RWPE1 (cell line): ENCODE measurements at regions of chr15 and their contacts with region 1.

Region 1: GRCh38 chr15:59532770-59533379 is 78.7 kb upstream of the GCNT3 start:
- DNase-seq: peak; percentile 52
- H3K27ac ChIP-seq: no peak overlapping the region
- CTCF ChIP-seq: peak; percentile 92

Region 2: DNA sequence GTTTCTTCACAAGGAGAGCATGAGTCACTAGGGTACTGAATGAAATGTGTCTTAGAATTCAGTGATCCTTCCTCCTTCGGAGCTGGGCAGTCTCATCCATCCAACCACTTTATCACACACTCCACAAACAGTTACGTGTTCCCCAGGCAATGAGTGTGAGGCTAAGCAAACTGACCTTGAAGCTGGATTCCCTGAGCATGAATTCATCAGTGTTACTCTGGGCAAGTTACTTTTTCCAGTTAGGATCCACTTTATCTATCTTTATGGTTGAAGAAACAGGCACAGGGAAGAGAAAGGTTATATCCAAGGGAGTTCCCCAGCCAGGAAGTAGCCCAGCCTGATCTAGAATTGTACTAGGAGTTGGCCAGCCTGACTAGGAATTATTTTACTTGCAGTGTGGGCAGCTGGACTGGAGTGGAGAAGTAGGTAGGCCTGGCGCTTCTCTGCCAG is 61.6 kb after region 1 on chr15:
- CTCF ChIA-PET with region 1: interaction called, 11 read pairs
- POLR2A ChIA-PET with region 1: no interaction called
- DNase-seq: peak; percentile 54
- H3K27ac ChIP-seq: no peak overlapping the region
- CTCF ChIP-seq: no peak

Region 3: DNA sequence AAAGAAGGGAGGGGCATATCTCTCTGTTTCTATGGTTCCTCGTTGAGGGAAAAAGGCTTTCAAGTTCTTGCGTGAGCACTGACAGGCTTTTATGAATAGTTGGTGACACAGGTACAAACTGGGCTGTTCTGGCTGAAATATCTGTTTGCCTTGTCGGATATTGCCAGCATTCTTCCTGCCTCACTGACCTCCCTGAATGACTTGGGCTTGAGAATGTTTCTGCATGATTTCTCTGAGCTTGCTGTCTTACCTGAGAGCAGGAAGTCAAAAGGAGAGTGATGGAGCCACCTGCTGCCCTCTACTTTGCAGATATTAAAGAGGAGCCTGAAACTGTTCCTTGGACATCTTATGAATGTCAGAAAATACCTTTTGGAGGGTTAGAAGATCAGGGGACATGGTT is 83.5 kb after region 1 on chr15:
- CTCF ChIA-PET with region 1: interaction called, 14 read pairs
- POLR2A ChIA-PET with region 1: no interaction called
- DNase-seq: no peak
- H3K27ac ChIP-seq: no peak overlapping the region
- CTCF ChIP-seq: no peak

Region 4: DNA sequence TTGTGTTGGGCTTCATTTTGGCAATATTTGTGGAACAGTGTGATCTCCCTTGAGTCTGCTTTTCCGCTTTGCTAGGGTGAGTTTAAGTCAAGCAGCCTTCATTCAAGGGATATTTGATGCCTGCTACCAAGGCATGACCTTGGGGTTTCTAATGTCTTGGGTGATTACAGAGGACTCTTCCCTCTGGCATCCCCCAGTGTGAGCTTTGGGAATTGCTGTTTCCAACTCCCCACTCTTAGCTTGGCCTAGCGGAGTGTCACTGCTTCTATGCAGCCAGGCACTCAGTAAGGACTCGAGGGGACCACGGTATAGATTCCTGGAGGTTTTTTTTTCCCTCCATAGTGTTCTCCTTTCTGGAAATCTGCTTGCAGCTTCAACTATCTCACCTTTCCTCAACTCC is 99.8 kb after region 1 on chr15:
- CTCF ChIA-PET with region 1: interaction called, 16 read pairs
- POLR2A ChIA-PET with region 1: interaction called, 6 read pairs
- DNase-seq: no peak
- H3K27ac ChIP-seq: no peak overlapping the region
- CTCF ChIP-seq: no peak; the same call in 1 of the 2 replicates

Region 5: GRCh38 chr15:59642351-59642750 is 109.5 kb after region 1 on chr15:
- CTCF ChIA-PET with region 1: interaction called, 18 read pairs
- POLR2A ChIA-PET with region 1: no interaction called
- DNase-seq: no peak
- H3K27ac ChIP-seq: no peak overlapping the region
- CTCF ChIP-seq: peak; percentile 25

Region 6: DNA sequence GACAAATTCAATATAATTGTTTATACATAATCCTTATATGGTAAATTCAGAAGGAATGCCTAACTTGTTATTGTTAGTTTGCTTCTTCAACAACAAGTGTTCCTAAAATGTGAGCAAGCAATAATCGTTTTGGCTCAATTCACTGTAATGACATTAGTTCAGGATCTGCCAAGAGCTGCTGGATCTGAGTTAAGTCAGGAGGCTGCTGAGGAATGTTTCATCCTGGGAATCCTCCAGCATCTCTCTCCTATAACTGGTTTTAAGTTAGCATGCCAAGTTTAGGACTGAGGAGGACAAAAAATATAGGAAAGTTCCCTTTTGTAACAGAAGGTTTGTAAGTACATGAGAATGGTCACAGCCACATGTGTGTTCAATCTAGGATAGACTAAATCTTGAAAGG is 129.4 kb after region 1 on chr15:
- CTCF ChIA-PET with region 1: no interaction called
- POLR2A ChIA-PET with region 1: no interaction called
- DNase-seq: no peak
- H3K27ac ChIP-seq: no peak overlapping the region
- CTCF ChIP-seq: no peak